ENCODE measurements at regions of chrX and their contacts with region 1.

Region 1: GRCh38 chrX:16882702-16883486 is 12.7 kb upstream of the RBBP7 start:
- DNase-seq: peak; percentile 67
- H3K4me3 Mint-ChIP-seq: peak overlapping the region; percentile 66
- H3K27ac Mint-ChIP-seq: peak overlapping the region; percentile 62
- H3K4me1 Mint-ChIP-seq: peaks cover 8% of the 10 kb centered on the region
- H3K27me3 Mint-ChIP-seq: peaks cover 7% of the 10 kb centered on the region

Region 2: GRCh38 chrX:16320765-16321355 is 562.0 kb before region 1 on chrX:
- CTCF ChIA-PET with region 1: no interaction called
- POLR2A ChIA-PET with region 1: no interaction called
- DNase-seq: no peak
- H3K4me3 Mint-ChIP-seq: no peak overlapping the region
- H3K27ac Mint-ChIP-seq: no peak overlapping the region
- H3K4me1 Mint-ChIP-seq: no peaks in the 10 kb centered on the region
- H3K27me3 Mint-ChIP-seq: no peaks in the 10 kb centered on the region

Region 3: DNA sequence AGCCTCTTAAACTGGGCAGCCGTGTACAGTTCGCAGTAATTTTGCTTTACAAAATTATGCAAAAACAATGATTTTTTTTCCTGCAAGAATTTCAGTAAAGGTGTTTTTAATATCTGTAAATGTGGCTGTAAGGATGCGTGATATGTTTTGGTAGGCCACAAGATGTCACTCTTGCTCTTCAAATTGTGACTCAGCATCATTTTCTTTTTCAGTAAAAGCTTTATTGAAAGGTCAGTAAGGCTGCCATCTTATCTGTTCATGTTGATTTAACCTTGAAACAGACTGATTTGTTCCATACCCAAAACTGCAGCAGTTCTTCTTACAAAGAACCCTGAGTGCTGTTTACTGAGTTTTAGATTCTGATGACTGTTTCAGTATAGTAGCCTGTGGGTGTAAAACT is 56.7 kb before region 1 on chrX:
- CTCF ChIA-PET with region 1: interaction called, 15 read pairs
- POLR2A ChIA-PET with region 1: no interaction called
- DNase-seq: no peak
- H3K4me3 Mint-ChIP-seq: no peak overlapping the region
- H3K27ac Mint-ChIP-seq: no peak overlapping the region
- H3K4me1 Mint-ChIP-seq: peaks cover 27% of the 10 kb centered on the region
- H3K27me3 Mint-ChIP-seq: no peaks in the 10 kb centered on the region

Region 4: GRCh38 chrX:16870095-16870860 is 12.6 kb before region 1 on chrX and contains the start of gene RBBP7:
- CTCF ChIA-PET with region 1: interaction called, 24 read pairs
- POLR2A ChIA-PET with region 1: interaction called, 21 read pairs
- DNase-seq: peak; percentile 90
- H3K4me3 Mint-ChIP-seq: peak within 1 kb of the TSS; percentile 95
- H3K27ac Mint-ChIP-seq: peak within 1 kb of the TSS; percentile 97
- H3K4me1 Mint-ChIP-seq: peaks cover 33% of the 10 kb centered on the region
- H3K27me3 Mint-ChIP-seq: peaks cover 7% of the 10 kb centered on the region
- total RNA-seq, gene RBBP7: 137 to 140 TPM

Region 5: GRCh38 chrX:17046478-17047097 is 163.7 kb after region 1 on chrX:
- CTCF ChIA-PET with region 1: interaction called, 25 read pairs
- POLR2A ChIA-PET with region 1: interaction called, 4 read pairs
- DNase-seq: peak; percentile 33
- H3K4me3 Mint-ChIP-seq: no peak overlapping the region
- H3K27ac Mint-ChIP-seq: no peak overlapping the region
- H3K4me1 Mint-ChIP-seq: no peaks in the 10 kb centered on the region
- H3K27me3 Mint-ChIP-seq: no peaks in the 10 kb centered on the region

Measured in activated CD4-positive, alpha-beta memory T cell treated with anti-CD3 and anti-CD28 coated beads, Interleukin-2, amount 10 ng/mL, durations not matched to agents 7 days and 5 days (primary cell).